Lower lobe of right lung (tissue), 2 donors: ENCODE measurements at regions of chr6 and their contacts with region 1.

Region 1: GRCh38 chr6:32692019-32692418 is 25.6 kb upstream of the HLA-DQB1 start:
- DNase-seq: peak; percentile 50
- ATAC-seq: peak; percentile 76 to 92
- H3K4me3 ChIP-seq: no peak overlapping the region
- H3K27ac ChIP-seq: no peak overlapping the region
- H3K4me1 ChIP-seq: no peaks in the 10 kb centered on the region
- H3K27me3 ChIP-seq: no peaks in the 10 kb centered on the region
- CTCF ChIP-seq: peak; percentile 52

Region 2: GRCh38 chr6:32439602-32440214 is 252.3 kb before region 1 on chr6 and contains the start of gene HLA-DRA:
- intact Hi-C with region 1: loop called (anchors 10 kb)
- DNase-seq: no peak
- ATAC-seq: peak; percentile 91 to 94
- H3K4me3 ChIP-seq: peak within 1 kb of the TSS; percentile 67
- H3K27ac ChIP-seq: peak within 1 kb of the TSS; percentile 88
- H3K4me1 ChIP-seq: peaks cover 15% of the 10 kb centered on the region
- H3K27me3 ChIP-seq: no peaks in the 10 kb centered on the region
- CTCF ChIP-seq: no peak
- total RNA-seq, gene HLA-DRA: 2,056 TPM

Region 3: GRCh38 chr6:32589598-32590449 is 102.2 kb before region 1 on chr6 and contains the start of gene HLA-DRB1:
- intact Hi-C with region 1: no loop called
- DNase-seq: peak; percentile 34
- ATAC-seq: peak; percentile 98 to 99
- H3K4me3 ChIP-seq: no peak within 1 kb of the TSS
- H3K27ac ChIP-seq: no peak within 1 kb of the TSS
- H3K4me1 ChIP-seq: no peaks in the 10 kb centered on the region
- H3K27me3 ChIP-seq: no peaks in the 10 kb centered on the region
- CTCF ChIP-seq: no peak
- total RNA-seq, gene HLA-DRB1: 480 TPM